ENCODE measurements at regions of chr19 and their contacts with region 1.

Region 1: DNA sequence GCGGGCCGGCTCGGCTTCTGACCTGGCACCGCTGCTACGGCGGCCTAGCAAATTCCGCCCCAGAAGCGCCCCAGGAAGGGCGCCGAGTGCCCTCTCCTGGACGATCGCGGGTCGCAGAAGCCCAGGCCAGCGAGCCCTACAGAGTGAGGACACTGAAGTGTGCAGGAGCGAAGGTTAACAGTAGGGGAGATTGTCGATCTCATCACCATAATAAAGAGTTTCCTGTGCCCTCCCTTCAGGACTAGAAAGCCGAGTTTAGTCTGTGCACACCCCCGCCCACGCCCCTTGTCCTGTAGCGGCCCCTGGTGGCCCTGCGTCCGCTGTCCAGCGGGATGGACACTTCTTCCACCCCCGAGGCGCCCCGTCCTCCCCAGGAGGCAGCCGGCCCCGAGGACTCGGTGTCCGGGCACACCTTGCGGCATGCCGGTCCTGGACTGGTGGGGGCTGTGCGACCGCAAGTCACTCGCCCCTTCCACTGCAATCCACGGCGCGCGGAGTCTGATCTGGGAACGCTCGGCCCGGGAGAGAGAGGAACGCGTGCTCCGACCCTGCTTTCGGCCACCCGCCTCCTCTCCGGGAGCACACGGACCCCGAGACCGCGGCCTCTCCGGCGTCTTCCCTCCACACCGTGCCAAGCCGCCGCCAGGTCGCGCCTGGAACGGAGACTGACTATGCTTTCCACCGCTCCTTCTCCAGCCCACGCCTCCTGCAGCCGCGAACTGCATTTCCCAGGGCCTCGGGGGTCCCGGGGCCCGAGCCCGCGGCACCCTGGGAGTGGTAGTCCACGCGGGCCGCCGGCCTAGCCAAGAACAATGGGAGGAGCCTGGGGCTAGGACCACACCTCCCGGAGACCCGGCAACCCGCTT is 769 bp upstream of the KMT2B start:
- DNase-seq: peak; percentile 75
- ATAC-seq: peak; percentile 79
- H3K4me3 Mint-ChIP-seq: peak overlapping the region; percentile 93
- H3K27ac Mint-ChIP-seq: peak overlapping the region; percentile 97
- H3K4me1 Mint-ChIP-seq: peaks cover 69% of the 10 kb centered on the region
- H3K27me3 Mint-ChIP-seq: no peaks in the 10 kb centered on the region
- CTCF ChIP-seq: no peak

Region 2: DNA sequence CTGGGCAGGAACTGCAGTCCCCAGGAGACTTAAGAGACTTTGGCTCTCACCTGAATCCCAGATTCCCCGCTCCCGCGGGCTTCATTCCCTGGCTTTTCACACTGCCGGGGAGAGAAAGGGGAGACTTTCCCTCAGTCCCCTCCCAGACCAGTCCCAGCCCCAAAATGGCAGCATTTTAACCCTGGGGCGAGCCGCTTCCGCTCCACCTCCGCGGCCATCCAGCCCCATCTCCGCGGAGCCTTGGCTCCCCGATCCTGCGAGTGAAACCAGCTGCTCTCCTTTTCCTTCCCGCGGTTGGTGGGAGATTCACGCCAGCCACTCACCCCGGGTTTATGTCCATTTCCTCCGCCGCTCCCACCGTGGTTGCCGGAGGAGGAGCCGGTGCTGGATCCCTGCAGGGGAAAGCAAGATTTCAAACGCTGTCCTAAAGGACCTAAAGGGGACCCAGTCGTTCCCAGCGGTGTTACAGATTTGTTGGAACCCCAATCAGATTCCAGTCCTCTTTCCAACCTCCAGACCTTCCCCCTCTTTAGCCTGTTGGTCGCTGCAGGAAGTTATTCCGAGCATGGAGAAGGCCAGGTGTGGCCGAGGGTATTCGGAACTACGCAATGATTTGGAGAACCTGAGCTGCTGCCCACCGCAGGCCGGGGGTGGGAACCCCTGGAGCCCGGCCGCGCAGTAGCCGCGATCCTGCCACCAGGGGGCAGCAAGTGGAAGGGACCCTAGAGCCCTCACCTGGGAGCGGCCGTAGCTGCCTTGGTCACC is 207.0 kb before region 1 on chr19:
- CTCF ChIA-PET with region 1: no interaction called
- POLR2A ChIA-PET with region 1: no interaction called
- intact Hi-C with region 1: loop called (anchors 1 kb)
- DNase-seq: peak; percentile 76
- ATAC-seq: peak; percentile 91
- H3K4me3 Mint-ChIP-seq: peak overlapping the region; percentile 73
- H3K27ac Mint-ChIP-seq: no peak overlapping the region
- H3K4me1 Mint-ChIP-seq: peaks cover 17% of the 10 kb centered on the region
- H3K27me3 Mint-ChIP-seq: peaks cover 53% of the 10 kb centered on the region
- CTCF ChIP-seq: peak; percentile 86

Region 3: DNA sequence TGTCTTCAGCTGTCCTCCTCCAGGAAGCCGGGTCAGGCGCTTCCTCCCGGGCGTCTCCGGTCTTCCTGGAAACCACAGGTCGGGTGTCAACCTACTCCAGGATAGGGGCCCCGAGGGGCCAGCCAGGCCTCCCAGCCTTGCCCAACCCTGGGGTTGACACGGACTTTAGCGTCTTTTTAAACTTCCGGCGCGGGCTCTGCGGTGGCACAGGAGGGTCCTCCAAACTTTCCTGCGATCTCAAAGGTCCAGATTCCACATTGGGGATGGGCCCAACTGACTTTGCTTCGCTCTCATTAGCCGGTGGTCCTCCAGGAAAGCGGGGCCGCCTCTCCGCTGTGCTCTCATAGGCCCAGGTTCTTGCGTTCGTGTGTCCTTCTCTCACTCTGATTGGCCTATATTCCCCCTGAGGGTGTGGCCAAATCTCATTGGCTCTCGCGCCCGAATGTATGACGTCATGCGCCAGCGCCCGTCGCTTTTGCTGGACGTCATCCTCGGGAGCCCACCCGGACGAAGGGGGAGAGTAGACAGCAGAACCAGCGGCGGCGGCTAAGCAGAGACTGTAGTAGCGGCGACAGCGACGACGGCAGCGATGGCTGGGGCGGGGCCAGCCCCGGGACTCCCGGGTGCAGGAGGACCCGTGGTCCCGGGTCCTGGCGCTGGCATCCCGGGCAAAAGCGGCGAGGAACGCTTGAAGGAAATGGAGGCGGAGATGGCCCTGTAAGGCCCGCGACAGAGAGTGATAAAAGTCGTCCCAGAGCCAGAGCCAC is 88.3 kb before region 1 on chr19 and contains the start of gene RBM42:
- CTCF ChIA-PET with region 1: no interaction called
- POLR2A ChIA-PET with region 1: no interaction called
- intact Hi-C with region 1: loop called (anchors 1 kb)
- DNase-seq: peak; percentile 96
- ATAC-seq: peak; percentile 99
- H3K4me3 Mint-ChIP-seq: peak within 1 kb of the TSS; percentile 99
- H3K27ac Mint-ChIP-seq: peak within 1 kb of the TSS; percentile 93
- H3K4me1 Mint-ChIP-seq: peaks cover 17% of the 10 kb centered on the region
- H3K27me3 Mint-ChIP-seq: no peaks in the 10 kb centered on the region
- CTCF ChIP-seq: no peak
- total RNA-seq, gene RBM42: 73.6 and 76.1 TPM in 2 replicates

Region 4: GRCh38 chr19:35693830-35694599 is 23.0 kb before region 1 on chr19:
- CTCF ChIA-PET with region 1: interaction called, 57 read pairs
- POLR2A ChIA-PET with region 1: interaction called, 238 read pairs
- intact Hi-C with region 1: loop called (anchors 1 kb)
- DNase-seq: peak; percentile 76
- ATAC-seq: peak; percentile 100
- H3K4me3 Mint-ChIP-seq: no peak overlapping the region
- H3K27ac Mint-ChIP-seq: no peak overlapping the region
- H3K4me1 Mint-ChIP-seq: peaks cover 3% of the 10 kb centered on the region
- H3K27me3 Mint-ChIP-seq: peaks cover 4% of the 10 kb centered on the region
- CTCF ChIP-seq: no peak

Region 5: DNA sequence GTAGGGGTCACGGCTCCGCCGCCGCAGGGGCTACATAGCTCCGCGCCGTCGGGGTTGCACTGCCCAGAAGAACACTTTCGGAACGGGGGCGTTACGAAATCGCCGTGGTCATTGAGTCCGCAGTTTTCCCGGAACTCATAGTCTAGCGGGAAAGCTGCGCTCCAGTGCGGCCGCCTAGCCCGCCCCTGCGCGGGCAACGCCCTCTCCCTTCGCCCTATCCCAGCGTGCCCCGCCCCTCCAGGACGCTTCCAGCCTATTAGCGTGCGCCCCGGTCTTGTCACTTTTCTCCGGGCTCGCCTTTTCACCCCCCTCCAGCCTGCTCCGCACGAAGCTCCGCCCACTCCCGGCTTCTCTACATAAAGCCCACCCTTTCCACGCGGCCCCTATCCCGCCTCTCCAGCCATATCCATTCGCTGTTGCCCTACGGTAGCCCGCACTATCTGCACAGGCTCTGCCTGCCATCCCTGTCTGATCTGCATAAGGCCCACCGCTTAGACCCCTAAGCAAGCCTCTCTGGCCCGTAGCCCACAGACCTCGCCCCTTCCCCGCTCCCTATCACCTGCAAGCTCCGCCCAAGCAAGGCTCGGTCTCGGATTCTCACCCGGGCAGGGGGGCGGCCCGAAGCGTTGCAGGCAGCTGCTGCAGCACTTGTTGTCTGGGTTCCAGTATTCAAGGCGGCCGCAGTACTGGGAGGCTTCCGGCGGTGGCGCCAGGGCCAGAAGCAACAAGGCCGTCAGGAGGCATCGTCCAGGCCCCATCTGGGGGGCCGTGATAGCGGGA is 23.6 kb after region 1 on chr19:
- CTCF ChIA-PET with region 1: interaction called, 5 read pairs
- POLR2A ChIA-PET with region 1: interaction called, 54 read pairs
- intact Hi-C with region 1: loop called (anchors 1 kb)
- DNase-seq: peak; percentile 89
- ATAC-seq: peak; percentile 65
- H3K4me3 Mint-ChIP-seq: peak overlapping the region; percentile 95
- H3K27ac Mint-ChIP-seq: peak overlapping the region; percentile 95
- H3K4me1 Mint-ChIP-seq: peaks cover 66% of the 10 kb centered on the region
- H3K27me3 Mint-ChIP-seq: no peaks in the 10 kb centered on the region
- CTCF ChIP-seq: no peak

Region 6: DNA sequence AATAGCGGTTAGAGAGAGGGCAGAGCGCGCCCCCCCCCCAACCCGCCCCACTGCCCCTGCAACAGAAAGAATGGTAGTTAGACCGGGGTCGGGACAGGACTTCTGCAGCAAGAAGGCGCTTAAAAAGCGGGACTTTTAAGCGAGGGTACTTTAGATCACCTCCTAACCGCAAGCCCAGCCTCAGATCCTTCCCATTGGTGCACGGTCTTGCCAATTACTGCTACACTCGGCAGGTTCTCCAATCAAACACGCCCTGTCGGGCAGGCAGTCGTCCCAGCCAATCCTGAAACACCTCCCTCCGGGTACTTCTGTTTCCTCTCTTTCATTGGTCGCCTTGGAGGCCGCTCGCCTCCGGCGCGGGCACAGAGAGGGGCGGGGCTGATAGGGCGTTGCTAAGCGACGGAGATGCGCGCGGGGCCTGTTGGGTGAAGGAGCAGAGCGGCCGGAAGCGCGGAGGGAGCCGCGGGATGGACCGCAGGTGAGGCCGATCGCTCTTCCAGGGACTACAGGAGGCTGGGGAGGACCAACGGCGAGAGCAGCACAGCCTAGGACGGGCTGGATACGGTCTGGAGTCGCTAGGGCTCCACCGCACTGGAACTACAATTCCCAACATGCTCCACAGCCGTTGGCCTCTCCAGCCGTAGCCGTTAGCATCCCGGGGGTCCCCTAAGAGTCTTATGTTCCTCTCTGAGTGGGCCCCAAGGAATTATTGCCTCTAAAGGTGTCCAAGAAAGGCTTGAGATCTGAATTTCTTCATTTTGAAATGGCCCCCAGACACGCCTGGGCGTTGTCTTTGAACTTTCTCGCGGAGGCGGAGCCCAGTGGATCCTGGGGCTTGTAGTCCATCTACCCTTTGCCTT is 40.9 kb after region 1 on chr19 and contains the start of gene PROSER3:
- CTCF ChIA-PET with region 1: no interaction called
- POLR2A ChIA-PET with region 1: interaction called, 5 read pairs
- intact Hi-C with region 1: loop called (anchors 1 kb)
- DNase-seq: peak; percentile 94
- ATAC-seq: peak; percentile 95
- H3K4me3 Mint-ChIP-seq: peak within 1 kb of the TSS; percentile 97
- H3K27ac Mint-ChIP-seq: peak within 1 kb of the TSS; percentile 96
- H3K4me1 Mint-ChIP-seq: peaks cover 33% of the 10 kb centered on the region
- H3K27me3 Mint-ChIP-seq: peaks cover 15% of the 10 kb centered on the region
- CTCF ChIP-seq: no peak
- total RNA-seq, gene PROSER3: 43.7 and 60.5 TPM in 2 replicates

Region 7: DNA sequence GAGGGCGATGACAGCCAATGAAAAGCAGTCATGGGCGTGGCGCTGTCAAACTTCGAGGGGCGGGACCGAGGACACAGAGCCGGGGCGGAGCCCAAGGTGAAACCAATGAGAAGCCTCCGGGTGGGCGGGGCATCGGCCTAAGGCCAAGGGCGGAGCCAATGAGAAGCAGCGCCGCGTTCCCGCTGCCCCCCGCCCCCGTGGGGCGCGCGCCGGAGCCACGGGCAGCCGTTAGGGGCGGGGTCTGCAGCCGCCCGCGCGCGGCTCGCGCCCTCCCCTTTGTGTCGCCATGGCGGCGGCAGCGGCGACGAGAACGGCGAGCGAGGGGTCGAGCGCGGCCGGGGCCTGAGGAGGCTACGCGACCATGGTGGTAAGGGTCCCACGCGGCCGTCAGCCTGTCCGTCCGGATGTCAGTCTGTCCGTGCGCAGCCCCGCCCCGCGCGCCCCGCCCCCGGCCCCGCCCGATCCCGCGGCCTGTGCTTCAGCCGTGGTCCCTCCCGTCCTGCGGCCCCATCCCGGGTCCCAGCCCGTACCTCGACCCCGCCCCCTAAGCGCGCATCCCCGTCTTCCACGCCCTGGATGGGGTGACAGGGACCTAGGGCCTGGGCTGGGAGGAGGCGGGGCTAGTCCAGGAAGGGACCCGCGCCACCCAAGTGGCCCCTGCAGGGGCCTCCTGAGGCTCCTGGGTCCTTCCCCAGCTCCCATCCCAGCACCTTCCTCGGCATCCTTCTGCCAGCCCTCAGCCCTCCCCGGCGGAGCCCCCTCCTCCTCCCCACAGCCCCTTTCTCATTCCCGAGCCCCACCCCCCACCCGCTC is 58.5 kb after region 1 on chr19 and contains the start of gene ARHGAP33:
- CTCF ChIA-PET with region 1: no interaction called
- POLR2A ChIA-PET with region 1: no interaction called
- intact Hi-C with region 1: no loop called
- DNase-seq: peak; percentile 97
- ATAC-seq: peak; percentile 99
- H3K4me3 Mint-ChIP-seq: peak within 1 kb of the TSS; percentile 79
- H3K27ac Mint-ChIP-seq: no peak within 1 kb of the TSS
- H3K4me1 Mint-ChIP-seq: peaks cover 9% of the 10 kb centered on the region
- H3K27me3 Mint-ChIP-seq: no peaks in the 10 kb centered on the region
- CTCF ChIP-seq: no peak
- total RNA-seq, gene ARHGAP33: 9.3 and 15.0 TPM in 2 replicates

Region 8: DNA sequence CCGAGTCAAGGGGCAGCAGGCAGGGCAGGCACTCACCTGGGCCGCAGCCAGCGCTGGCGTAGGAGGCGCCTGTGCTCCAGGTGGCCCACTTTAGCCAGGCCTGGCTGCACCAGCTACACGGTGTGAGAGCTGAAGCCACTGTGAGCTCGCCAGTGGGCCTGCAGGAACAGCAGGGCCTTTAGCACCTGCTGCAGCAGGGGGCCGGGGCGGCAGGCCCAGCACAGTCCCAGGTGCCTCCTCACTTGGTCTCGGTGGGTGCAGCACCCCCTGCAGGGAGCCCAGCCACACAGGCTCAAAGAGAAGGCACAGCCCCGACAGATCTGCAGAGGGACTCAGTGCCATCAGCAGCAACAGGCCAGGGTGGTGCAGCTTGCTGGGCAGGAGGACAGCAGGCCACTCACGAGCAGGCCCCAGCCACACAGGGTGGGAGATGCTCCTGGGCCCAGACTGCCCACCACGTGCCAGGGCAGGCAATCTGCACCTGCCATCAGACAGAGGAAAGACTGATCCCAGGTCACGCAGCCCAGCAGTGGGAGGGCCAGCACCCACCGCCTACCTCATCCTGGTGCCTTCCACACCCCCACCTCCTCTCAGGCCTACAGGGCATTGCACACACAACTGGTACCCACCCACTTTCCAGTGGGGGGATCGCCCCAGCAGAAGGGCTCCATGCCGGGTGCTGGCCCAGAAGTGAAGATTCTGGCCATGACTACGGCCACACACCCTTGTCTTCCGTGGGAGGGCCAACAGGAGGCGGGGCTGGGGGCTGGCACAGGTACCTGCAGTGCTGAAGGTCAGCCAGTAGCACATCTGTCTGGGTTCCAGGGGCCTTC is 74.2 kb after region 1 on chr19:
- CTCF ChIA-PET with region 1: no interaction called
- POLR2A ChIA-PET with region 1: no interaction called
- intact Hi-C with region 1: no loop called
- DNase-seq: no peak
- ATAC-seq: no peak
- H3K4me3 Mint-ChIP-seq: no peak overlapping the region
- H3K27ac Mint-ChIP-seq: no peak overlapping the region
- H3K4me1 Mint-ChIP-seq: no peaks in the 10 kb centered on the region
- H3K27me3 Mint-ChIP-seq: peaks cover 7% of the 10 kb centered on the region
- CTCF ChIP-seq: no peak

Region 9: GRCh38 chr19:35869327-35870123 is 152.5 kb after region 1 on chr19:
- CTCF ChIA-PET with region 1: no interaction called
- POLR2A ChIA-PET with region 1: no interaction called
- intact Hi-C with region 1: no loop called
- DNase-seq: peak; percentile 55
- ATAC-seq: peak; percentile 83
- H3K4me3 Mint-ChIP-seq: peak overlapping the region; percentile 67
- H3K27ac Mint-ChIP-seq: no peak overlapping the region
- H3K4me1 Mint-ChIP-seq: peaks cover 17% of the 10 kb centered on the region
- H3K27me3 Mint-ChIP-seq: peaks cover 61% of the 10 kb centered on the region
- CTCF ChIP-seq: no peak

Region 10: GRCh38 chr19:35931161-35931873 is 214.3 kb after region 1 on chr19:
- CTCF ChIA-PET with region 1: no interaction called
- POLR2A ChIA-PET with region 1: interaction called, 4 read pairs
- intact Hi-C with region 1: loop called (anchors 1 kb)
- DNase-seq: peak; percentile 99
- ATAC-seq: peak; percentile 94
- H3K4me3 Mint-ChIP-seq: peak overlapping the region; percentile 72
- H3K27ac Mint-ChIP-seq: peak overlapping the region; percentile 87
- H3K4me1 Mint-ChIP-seq: peaks cover 48% of the 10 kb centered on the region
- H3K27me3 Mint-ChIP-seq: peaks cover 4% of the 10 kb centered on the region
- CTCF ChIP-seq: no peak